ENCODE measurements at regions of chr7 and their contacts with region 1.

Region 1: GRCh38 chr7:63900394-63901203 is 98.0 kb upstream of the ZNF722 start:
- DNase-seq: peak; percentile 96
- ATAC-seq: peak; percentile 96
- H3K4me3 Mint-ChIP-seq: peak overlapping the region; percentile 85
- H3K27ac Mint-ChIP-seq: peak overlapping the region; percentile 77
- H3K4me1 Mint-ChIP-seq: no peaks in the 10 kb centered on the region
- H3K27me3 Mint-ChIP-seq: no peaks in the 10 kb centered on the region

Region 2: GRCh38 chr7:63925623-63926460 is 25.2 kb after region 1 on chr7:
- CTCF ChIA-PET with region 1: interaction called, 5 read pairs
- POLR2A ChIA-PET with region 1: interaction called, 7 read pairs
- intact Hi-C with region 1: loop called (anchors 1 kb)
- DNase-seq: peak; percentile 95
- ATAC-seq: peak; percentile 97
- H3K4me3 Mint-ChIP-seq: peak overlapping the region; percentile 87
- H3K27ac Mint-ChIP-seq: peak overlapping the region; percentile 93
- H3K4me1 Mint-ChIP-seq: peaks cover 16% of the 10 kb centered on the region
- H3K27me3 Mint-ChIP-seq: no peaks in the 10 kb centered on the region

Region 3: GRCh38 chr7:64307254-64308015 is 406.8 kb after region 1 on chr7:
- CTCF ChIA-PET with region 1: no interaction called
- POLR2A ChIA-PET with region 1: no interaction called
- intact Hi-C with region 1: loop called (anchors 1 kb)
- DNase-seq: peak; percentile 95
- ATAC-seq: peak; percentile 97
- H3K4me3 Mint-ChIP-seq: peak overlapping the region; percentile 84
- H3K27ac Mint-ChIP-seq: peak overlapping the region; percentile 91
- H3K4me1 Mint-ChIP-seq: peaks cover 25% of the 10 kb centered on the region
- H3K27me3 Mint-ChIP-seq: no peaks in the 10 kb centered on the region

Region 4: DNA sequence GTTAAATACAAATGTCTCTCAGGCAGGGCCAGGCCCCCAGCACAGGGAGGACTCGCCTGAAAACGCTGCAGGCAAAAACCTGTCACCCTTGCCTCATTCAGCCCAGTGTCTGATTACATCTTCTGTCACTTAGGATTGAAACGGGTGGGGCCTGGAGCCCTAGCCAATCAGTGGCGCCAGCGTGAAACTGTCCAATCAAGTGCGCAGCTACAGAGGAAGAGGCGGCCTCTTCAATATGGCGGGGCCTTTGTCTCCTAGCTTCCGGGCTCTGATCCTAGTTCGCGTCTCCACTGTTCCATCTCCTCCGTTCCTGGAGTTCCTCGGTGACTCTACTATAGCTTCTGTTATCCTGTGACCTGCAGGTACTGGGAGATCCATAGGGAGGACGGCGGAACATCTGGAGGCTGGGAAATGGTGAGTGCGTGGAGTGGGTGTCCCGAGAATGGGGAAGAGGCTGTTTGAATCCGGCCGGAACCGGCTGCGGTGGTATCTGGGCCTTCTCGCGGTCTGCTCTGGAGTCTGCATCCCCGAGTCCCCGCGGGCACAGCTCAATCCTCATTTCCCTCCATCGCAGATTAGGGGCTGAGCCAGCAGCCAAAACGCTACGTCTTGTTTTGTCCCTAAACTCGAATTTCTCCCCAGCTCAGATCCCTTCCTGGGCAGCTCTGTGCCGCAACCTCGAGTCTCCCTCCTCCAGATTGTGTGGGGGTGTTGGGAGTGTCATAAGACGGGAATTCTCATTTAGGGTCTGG is 413.3 kb after region 1 on chr7 and contains the start of gene ZNF736:
- CTCF ChIA-PET with region 1: no interaction called
- POLR2A ChIA-PET with region 1: no interaction called
- intact Hi-C with region 1: loop called in 1 of 2 experiments (anchors 1 kb)
- DNase-seq: peak; percentile 93
- ATAC-seq: peak; percentile 100
- H3K4me3 Mint-ChIP-seq: peak within 1 kb of the TSS; percentile 89
- H3K27ac Mint-ChIP-seq: peak within 1 kb of the TSS; percentile 99
- H3K4me1 Mint-ChIP-seq: peaks cover 30% of the 10 kb centered on the region
- H3K27me3 Mint-ChIP-seq: no peaks in the 10 kb centered on the region
- total RNA-seq, gene ZNF736: 23.5 to 25.5 TPM

Region 5: GRCh38 chr7:64794171-64794844 is 893.7 kb after region 1 on chr7 and contains the start of gene ZNF138:
- CTCF ChIA-PET with region 1: no interaction called
- POLR2A ChIA-PET with region 1: no interaction called
- intact Hi-C with region 1: loop called in 1 of 2 experiments (anchors 10 kb)
- DNase-seq: peak; percentile 97
- ATAC-seq: peak; percentile 100
- H3K4me3 Mint-ChIP-seq: peak within 1 kb of the TSS; percentile 97
- H3K27ac Mint-ChIP-seq: peak within 1 kb of the TSS; percentile 99
- H3K4me1 Mint-ChIP-seq: peaks cover 23% of the 10 kb centered on the region
- H3K27me3 Mint-ChIP-seq: no peaks in the 10 kb centered on the region
- total RNA-seq, gene ZNF138: 12.0 to 19.6 TPM

Region 6: GRCh38 chr7:64887756-64888508 is 987.3 kb after region 1 on chr7:
- CTCF ChIA-PET with region 1: no interaction called
- POLR2A ChIA-PET with region 1: no interaction called
- intact Hi-C with region 1: loop called in 1 of 2 experiments (anchors 5 kb)
- DNase-seq: peak; percentile 69
- ATAC-seq: peak; percentile 62
- H3K4me3 Mint-ChIP-seq: peak overlapping the region; percentile 74
- H3K27ac Mint-ChIP-seq: no peak overlapping the region
- H3K4me1 Mint-ChIP-seq: peaks cover 14% of the 10 kb centered on the region
- H3K27me3 Mint-ChIP-seq: peaks cover 52% of the 10 kb centered on the region

Region 7: DNA sequence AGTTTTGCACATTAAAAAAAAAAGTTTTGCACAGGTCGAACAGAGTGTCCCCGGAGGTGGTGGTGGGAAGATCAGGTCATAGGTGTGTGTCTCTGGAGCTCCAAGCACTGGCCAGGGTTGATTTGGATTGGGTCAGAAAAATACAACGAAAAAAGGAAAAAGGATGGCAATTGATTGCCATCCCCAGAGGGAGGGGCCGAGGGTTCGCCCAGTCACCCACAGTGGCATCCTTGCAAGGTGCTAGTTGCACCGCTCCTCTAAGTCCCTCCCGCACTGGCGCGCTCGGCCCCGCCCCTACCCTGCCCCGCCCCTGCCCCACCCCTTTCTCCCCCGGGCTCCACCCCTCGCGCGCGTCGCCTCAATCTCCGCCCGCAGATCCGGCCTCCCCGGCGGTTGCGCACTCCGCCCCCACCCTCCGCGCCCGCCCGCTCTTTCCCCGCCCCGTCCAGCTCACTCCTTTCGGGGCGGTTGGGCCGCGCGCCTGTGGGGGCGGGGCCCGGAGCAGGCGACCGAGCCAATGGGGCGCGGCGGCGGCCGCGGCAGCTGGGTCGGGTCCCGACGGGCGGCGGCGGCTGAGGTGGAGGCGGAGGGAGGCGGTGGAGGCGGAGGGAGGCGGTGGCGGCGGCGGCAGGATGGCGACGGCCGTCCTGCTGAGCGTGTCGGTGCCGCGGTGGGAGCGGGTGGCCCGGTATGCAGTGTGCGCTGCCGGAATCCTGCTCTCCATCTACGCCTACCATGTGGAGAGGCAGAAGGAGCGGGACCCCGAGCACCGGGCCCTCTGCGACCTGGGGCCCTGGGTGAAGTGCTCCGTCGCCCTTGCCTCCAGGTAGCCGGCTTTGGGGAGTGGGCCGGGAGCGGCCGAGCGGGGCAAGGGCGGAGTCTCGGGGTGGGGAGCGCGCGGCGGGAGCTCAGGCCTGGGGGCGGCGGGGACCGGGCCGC is 1137.4 kb after region 1 on chr7:
- CTCF ChIA-PET with region 1: no interaction called
- POLR2A ChIA-PET with region 1: no interaction called
- intact Hi-C with region 1: loop called (anchors 5 to 10 kb)
- DNase-seq: peak; percentile 97
- ATAC-seq: peak; percentile 93
- H3K4me3 Mint-ChIP-seq: peak overlapping the region; percentile 82
- H3K27ac Mint-ChIP-seq: no peak overlapping the region
- H3K4me1 Mint-ChIP-seq: peaks cover 13% of the 10 kb centered on the region
- H3K27me3 Mint-ChIP-seq: no peaks in the 10 kb centered on the region

Measured in activated CD4-positive, alpha-beta T cell treated with anti-CD3 and anti-CD28 coated beads for 36 hours (primary cell).